ENCODE measurements at regions of chr11 and their contacts with region 1.

Region 1: DNA sequence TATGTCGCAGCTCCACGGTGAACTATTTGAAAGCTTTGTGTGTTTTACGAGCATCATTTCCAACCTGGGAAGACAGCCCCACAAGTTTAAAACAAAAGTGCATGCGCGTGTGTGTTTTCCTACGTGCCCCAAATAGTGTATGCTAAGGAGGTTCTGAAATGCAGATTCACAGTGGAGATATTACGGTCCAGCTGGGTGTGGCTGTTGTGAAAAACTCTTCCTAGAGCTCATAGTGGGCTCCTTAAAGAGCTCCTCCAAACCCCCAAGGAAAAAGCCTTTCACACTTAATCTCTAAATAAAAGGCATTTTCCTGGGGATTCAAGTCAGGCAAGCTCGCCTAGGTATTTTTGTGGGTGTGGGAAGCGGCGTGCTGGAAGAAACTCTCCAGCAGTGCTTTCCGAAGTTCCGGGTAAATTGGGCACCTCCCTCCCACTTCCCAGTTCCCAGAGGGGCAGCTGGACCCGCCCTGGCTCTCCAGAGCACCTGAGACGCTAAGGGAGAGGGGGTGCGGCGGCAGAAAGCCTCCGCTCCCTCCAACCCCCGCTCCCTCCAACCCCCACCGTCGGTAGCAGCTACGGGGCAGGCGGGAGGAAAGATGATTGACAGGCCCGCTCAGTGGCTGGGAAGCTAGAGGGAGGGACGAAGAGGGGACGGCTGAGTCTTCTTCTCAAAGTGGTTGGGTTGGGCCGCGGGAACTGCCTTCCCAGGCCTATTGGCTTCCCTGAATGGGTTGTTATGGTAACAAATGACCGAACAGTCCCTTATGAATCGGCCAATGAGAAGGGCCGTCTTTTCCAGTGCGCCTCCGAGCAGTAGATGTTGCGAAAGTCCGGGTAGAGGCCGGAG is 558 bp upstream of the PCF11 start:
- DNase-seq: peak in 13 of 14 experiments; percentile 47 to 100 (median 97)
- ATAC-seq: peak; percentile 84
- H3K4me3 ChIP-seq: peak overlapping the region; percentile 99
- H3K4me3 Mint-ChIP-seq: peak overlapping the region; percentile 98
- H3K27ac ChIP-seq: peak overlapping the region; percentile 98 to 99
- H3K27ac Mint-ChIP-seq: peak overlapping the region; percentile 100
- H3K4me1 ChIP-seq: peaks cover 16% of the 10 kb centered on the region
- H3K4me1 Mint-ChIP-seq: peaks cover 26% of the 10 kb centered on the region
- H3K27me3 ChIP-seq: no peaks in the 10 kb centered on the region
- H3K27me3 Mint-ChIP-seq: no peaks in the 10 kb centered on the region
- CTCF ChIP-seq: no peak

Region 2: DNA sequence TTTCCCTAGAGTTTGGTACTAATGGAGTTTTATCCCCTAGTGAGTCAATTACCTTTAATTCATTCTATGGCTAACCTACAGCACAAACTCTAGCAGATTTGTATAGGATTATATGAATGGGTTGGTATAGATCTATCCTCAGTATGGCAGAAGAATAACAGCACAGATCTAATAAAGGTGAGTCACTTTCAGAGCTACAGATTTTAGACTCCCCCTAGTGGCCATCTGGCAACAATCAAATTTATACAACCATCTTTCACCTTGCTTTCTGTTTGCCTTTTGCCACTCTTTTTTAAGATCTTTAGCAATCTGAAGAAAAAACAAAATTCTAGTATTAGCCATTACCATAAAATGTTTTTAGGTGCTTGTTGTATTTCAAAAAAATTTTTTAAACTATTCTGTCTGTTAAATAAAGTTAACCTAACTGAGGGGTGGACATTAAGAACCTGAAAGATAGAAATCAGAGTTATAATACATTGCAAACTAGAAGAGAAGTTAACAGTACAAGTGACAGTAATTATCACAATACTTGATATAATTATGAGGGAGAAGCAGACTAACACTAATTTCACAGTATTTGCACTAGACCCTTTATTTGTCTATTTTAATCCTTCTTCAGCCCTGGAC is 229.0 kb before region 1 on chr11:
- CTCF ChIA-PET with region 1: no interaction called
- POLR2A ChIA-PET with region 1: interaction called, 10 read pairs
- intact Hi-C with region 1: no loop called
- DNase-seq: peak in 8 of 14 experiments; percentile 7 to 82 (median 44)
- ATAC-seq: peak; percentile 98
- H3K4me3 ChIP-seq: no peak overlapping the region
- H3K4me3 Mint-ChIP-seq: peak overlapping the region; percentile 1
- H3K27ac ChIP-seq: no peak overlapping the region
- H3K27ac Mint-ChIP-seq: peak overlapping the region; percentile 64
- H3K4me1 ChIP-seq: peaks cover 2% of the 10 kb centered on the region
- H3K4me1 Mint-ChIP-seq: peaks cover 44% of the 10 kb centered on the region
- H3K27me3 ChIP-seq: no peaks in the 10 kb centered on the region
- H3K27me3 Mint-ChIP-seq: no peaks in the 10 kb centered on the region
- CTCF ChIP-seq: peak; percentile 97

Region 3: DNA sequence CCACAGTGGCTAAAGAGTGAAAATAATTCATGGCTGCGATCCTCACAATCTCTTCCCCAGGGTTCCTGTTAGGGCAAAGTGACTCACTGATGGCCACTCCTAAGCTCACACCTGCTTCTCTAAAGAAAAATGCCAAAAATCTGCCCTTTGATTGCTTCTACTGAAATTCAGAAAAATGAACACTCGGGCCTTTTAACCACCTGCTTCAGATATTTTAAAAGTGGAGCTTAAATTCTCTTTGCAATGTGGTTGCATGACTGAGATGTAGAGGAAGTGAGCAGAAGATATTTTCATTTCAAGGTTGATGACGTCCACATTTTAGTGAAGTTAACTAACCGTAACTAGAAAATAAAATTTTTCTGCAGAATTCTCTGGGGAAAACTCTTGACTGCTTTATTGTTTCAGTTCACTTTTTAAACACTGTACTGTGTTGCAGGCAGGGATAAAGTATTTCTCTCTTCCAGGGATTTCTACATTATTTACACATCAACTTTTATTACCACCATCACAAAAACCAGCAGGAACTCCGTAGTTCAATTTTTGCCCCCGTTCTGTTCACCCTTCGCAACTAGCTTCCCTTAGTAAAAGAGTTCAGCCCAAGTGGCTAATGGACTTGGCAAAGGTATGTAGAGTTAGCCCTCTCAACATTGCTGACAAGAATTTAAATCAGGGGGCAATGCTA is 93.2 kb before region 1 on chr11:
- CTCF ChIA-PET with region 1: no interaction called
- POLR2A ChIA-PET with region 1: interaction called, 29 read pairs
- intact Hi-C with region 1: no loop called
- DNase-seq: peak in 3 of 14 experiments; percentile 46 to 62 (median 53)
- ATAC-seq: peak; percentile 87
- H3K4me3 ChIP-seq: peak overlapping the region; percentile 39
- H3K4me3 Mint-ChIP-seq: peak overlapping the region; percentile 87
- H3K27ac ChIP-seq: peak overlapping the region; percentile 6 to 36
- H3K27ac Mint-ChIP-seq: peak overlapping the region; percentile 78
- H3K4me1 ChIP-seq: peaks cover 13% of the 10 kb centered on the region
- H3K4me1 Mint-ChIP-seq: peaks cover 39% of the 10 kb centered on the region
- H3K27me3 ChIP-seq: no peaks in the 10 kb centered on the region
- H3K27me3 Mint-ChIP-seq: no peaks in the 10 kb centered on the region
- CTCF ChIP-seq: no peak

Region 4: GRCh38 chr11:83115551-83115950 is 40.8 kb before region 1 on chr11:
- CTCF ChIA-PET with region 1: interaction called, 4 read pairs
- POLR2A ChIA-PET with region 1: interaction called, 59 read pairs
- intact Hi-C with region 1: loop called in 1 of 2 experiments (anchors 2 kb)
- DNase-seq: no peak
- ATAC-seq: no peak
- H3K4me3 ChIP-seq: no peak overlapping the region
- H3K4me3 Mint-ChIP-seq: peak overlapping the region; percentile 75
- H3K27ac ChIP-seq: no peak overlapping the region
- H3K27ac Mint-ChIP-seq: peak overlapping the region; percentile 72
- H3K4me1 ChIP-seq: peaks cover 34% of the 10 kb centered on the region
- H3K4me1 Mint-ChIP-seq: peaks cover 52% of the 10 kb centered on the region
- H3K27me3 ChIP-seq: no peaks in the 10 kb centered on the region
- H3K27me3 Mint-ChIP-seq: no peaks in the 10 kb centered on the region
- CTCF ChIP-seq: no peak

Region 5: GRCh38 chr11:83174008-83174407 is 17.6 kb after region 1 on chr11:
- CTCF ChIA-PET with region 1: interaction called, 6 read pairs
- POLR2A ChIA-PET with region 1: interaction called, 39 read pairs
- intact Hi-C with region 1: loop called in 1 of 2 experiments (anchors 2 kb)
- DNase-seq: no peak
- ATAC-seq: no peak
- H3K4me3 ChIP-seq: no peak overlapping the region
- H3K4me3 Mint-ChIP-seq: peak overlapping the region; percentile 14
- H3K27ac ChIP-seq: no peak overlapping the region
- H3K27ac Mint-ChIP-seq: peak overlapping the region; percentile 66
- H3K4me1 ChIP-seq: peaks cover 40% of the 10 kb centered on the region
- H3K4me1 Mint-ChIP-seq: peaks cover 75% of the 10 kb centered on the region
- H3K27me3 ChIP-seq: no peaks in the 10 kb centered on the region
- H3K27me3 Mint-ChIP-seq: no peaks in the 10 kb centered on the region
- CTCF ChIP-seq: no peak

Region 6: GRCh38 chr11:83193315-83194280 is 37.2 kb after region 1 on chr11 and contains the start of gene ANKRD42:
- CTCF ChIA-PET with region 1: no interaction called
- POLR2A ChIA-PET with region 1: interaction called, 81 read pairs
- intact Hi-C with region 1: loop called (anchors 1 to 2 kb)
- DNase-seq: peak; percentile 65 to 95 (median 76)
- ATAC-seq: peak; percentile 69
- H3K4me3 ChIP-seq: peak within 1 kb of the TSS; percentile 70
- H3K4me3 Mint-ChIP-seq: peak within 1 kb of the TSS; percentile 99
- H3K27ac ChIP-seq: peak within 1 kb of the TSS; percentile 88 to 97
- H3K27ac Mint-ChIP-seq: peak within 1 kb of the TSS; percentile 99
- H3K4me1 ChIP-seq: peaks cover 26% of the 10 kb centered on the region
- H3K4me1 Mint-ChIP-seq: peaks cover 60% of the 10 kb centered on the region
- H3K27me3 ChIP-seq: no peaks in the 10 kb centered on the region
- H3K27me3 Mint-ChIP-seq: no peaks in the 10 kb centered on the region
- CTCF ChIP-seq: no peak
- total RNA-seq, gene ANKRD42: 8.6 to 10.0 TPM

Measured in CD4-positive, alpha-beta T cell (primary cell).